Activated CD4-positive, alpha-beta memory T cell treated with anti-CD3 and anti-CD28 coated beads, Interleukin-2, amount 10 ng/mL, durations not matched to agents 7 days and 5 days (primary cell): ENCODE measurements at regions of chr11 and their contacts with region 1.

Region 1: DNA sequence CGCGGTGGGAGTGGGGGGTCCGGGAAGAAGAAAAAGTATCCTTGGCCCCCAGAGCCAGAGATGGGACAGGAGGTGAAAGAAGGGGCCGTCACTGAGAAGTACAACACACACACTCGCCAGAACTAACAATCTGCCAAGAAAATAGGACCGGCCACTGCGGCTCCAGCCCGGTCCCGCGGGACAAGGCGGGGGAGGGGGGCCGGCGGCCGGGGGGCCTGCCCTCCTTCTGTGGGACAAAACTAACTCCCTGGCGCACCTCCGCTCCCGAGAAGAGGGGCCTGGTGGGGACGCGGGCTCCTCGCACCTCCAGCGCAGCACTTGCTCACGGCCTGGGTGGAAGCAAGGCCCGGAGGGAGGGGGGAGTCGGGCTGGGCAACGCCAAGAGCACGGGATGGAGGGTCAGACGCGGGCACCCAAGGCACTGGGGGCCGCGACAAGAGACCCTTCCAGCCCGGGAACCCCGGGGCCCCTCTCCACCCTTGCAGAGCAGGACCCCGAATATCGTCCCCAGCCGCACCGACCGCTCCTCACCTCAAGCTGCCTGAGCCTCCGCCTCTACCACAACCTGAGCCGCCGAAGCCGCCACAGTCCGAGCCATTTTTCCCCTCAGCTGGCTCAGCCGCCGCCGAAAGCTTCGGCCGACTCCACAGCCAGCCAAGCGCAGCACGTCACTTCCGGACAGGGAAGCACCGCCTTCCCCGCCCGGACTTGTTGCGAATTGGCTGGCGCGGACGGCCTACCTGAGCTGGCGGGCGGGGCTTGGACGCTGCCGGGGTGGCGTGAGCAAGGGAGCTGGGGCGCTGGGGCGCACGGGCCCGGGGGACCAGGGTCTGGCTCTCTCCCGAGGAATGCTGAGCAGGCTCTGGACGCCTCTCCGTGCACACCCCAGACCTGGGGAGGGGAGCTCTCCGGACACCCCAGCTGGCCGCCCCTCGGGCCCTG is at the start of gene PIK3C2A:
- DNase-seq: peak; percentile 96
- H3K4me3 Mint-ChIP-seq: peak within 1 kb of the TSS; percentile 99
- H3K27ac Mint-ChIP-seq: peak within 1 kb of the TSS; percentile 90
- H3K4me1 Mint-ChIP-seq: peaks cover 31% of the 10 kb centered on the region
- H3K27me3 Mint-ChIP-seq: no peaks in the 10 kb centered on the region
- total RNA-seq, gene PIK3C2A: 23.7 to 24.9 TPM

Region 2: DNA sequence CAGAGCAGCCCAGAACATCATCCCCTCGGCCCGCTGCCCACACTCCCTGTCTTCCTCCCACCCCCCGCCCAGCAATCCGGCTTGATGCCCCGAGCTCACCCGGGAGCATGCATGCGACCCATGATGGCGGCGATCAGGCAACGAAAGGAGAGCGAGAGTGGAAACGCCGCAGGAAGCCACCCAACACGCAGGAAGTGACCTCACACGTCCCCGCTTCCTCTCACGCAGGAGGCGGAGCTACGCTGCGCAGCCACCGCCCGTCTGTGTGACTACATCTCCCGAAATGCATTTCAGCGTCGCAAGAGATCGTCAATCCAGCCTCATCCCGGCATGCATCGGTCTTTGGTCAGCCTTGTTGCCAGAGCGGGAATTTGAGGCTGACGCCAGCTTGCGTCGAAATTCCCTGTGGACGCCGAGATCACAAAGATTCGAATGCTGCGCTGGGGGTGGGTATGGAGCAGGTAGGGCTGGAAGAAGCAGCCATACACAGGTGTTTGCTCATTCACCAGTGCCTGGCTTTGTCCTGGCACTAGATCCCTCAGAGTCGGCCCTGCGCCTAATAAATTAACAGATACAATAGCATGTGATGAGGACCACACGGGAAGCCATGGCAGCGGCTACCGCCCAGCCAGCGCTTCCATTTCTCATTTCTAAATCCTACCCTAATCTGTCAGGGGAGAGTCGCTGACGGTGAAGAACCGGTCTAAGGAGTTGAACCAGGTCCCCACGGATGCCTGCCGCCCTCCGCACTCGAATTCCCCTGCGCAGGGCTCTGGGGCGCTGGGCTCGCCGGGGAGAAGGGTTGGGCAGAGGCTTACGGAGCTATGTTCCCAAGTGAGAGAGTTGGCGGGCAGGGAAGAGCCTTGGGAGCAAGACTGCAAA is 129.8 kb before region 1 on chr11 and contains the start of gene RPS13:
- CTCF ChIA-PET with region 1: interaction called, 9 read pairs
- POLR2A ChIA-PET with region 1: interaction called, 38 read pairs
- DNase-seq: peak; percentile 96
- H3K4me3 Mint-ChIP-seq: peak within 1 kb of the TSS; percentile 96
- H3K27ac Mint-ChIP-seq: peak within 1 kb of the TSS; percentile 96
- H3K4me1 Mint-ChIP-seq: peaks cover 49% of the 10 kb centered on the region
- H3K27me3 Mint-ChIP-seq: no peaks in the 10 kb centered on the region
- total RNA-seq, gene RPS13: 951 to 981 TPM